ENCODE measurements at regions of chr3 and their contacts with region 1.

Region 1: GRCh38 chr3:71583566-71584449 is at the start of gene FOXP1:
- DNase-seq: peak; percentile 90 to 94 (median 94)
- H3K4me3 ChIP-seq: peak within 1 kb of the TSS; percentile 85 to 99 (median 95)
- H3K27ac ChIP-seq: peak within 1 kb of the TSS; percentile 93 to 95
- H3K4me1 ChIP-seq: peaks cover 22 to 43% (median 38%) of the 10 kb centered on the region in 4 experiments
- H3K27me3 ChIP-seq: no peaks in the 10 kb centered on the region

Region 2: GRCh38 chr3:71542521-71543370 is 41.1 kb before region 1 on chr3:
- CTCF ChIA-PET with region 1: interaction called, 6 read pairs
- POLR2A ChIA-PET with region 1: interaction called, 11 read pairs
- DNase-seq: peak; percentile 70 to 97 (median 95)
- H3K4me3 ChIP-seq: peak overlapping the region in 5 of 7 experiments; percentile 20 to 57 (median 40)
- H3K27ac ChIP-seq: peak overlapping the region; percentile 16 to 69
- H3K4me1 ChIP-seq: peaks cover 18 to 65% (median 46%) of the 10 kb centered on the region in 4 experiments
- H3K27me3 ChIP-seq: no peaks in the 10 kb centered on the region

Region 3: DNA sequence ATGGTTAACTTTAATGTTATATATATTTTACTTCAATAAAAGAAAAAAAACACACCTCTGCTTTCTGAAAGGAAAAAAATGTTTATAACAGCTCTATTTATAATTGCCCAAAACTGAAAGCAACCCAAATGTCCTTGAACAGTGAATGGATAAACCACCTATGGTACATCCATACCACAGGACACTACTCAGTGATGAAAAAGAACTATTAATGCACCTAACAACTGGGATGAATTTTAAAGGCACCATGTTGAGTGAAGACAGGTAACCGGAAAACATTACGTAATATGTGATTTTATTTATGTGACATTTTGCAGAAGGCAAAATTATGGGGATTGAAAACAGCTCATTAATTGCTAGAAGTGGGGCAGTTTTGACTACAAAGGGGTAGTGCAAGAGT is 23.6 kb after region 1 on chr3:
- CTCF ChIA-PET with region 1: no interaction called
- POLR2A ChIA-PET with region 1: no interaction called
- DNase-seq: no peak
- H3K4me3 ChIP-seq: no peak overlapping the region
- H3K27ac ChIP-seq: no peak overlapping the region
- H3K4me1 ChIP-seq: no peaks in the 10 kb centered on the region
- H3K27me3 ChIP-seq: no peaks in the 10 kb centered on the region

Measured in common myeloid progenitor, CD34-positive (primary cell).